Gastrocnemius medialis (tissue), 4 donors: ENCODE measurements at regions of chr5 and their contacts with region 1.

Region 1: GRCh38 chr5:159106569-159107282 is 7.0 kb upstream of the EBF1 start:
- DNase-seq: peak in 1 of 2 donors; percentile 40
- ATAC-seq: peak; percentile 71 to 75
- H3K4me3 ChIP-seq: peak overlapping the region; percentile 30 to 53 (median 42)
- H3K27ac ChIP-seq: peak overlapping the region in 1 of 4 donors; percentile 29
- H3K4me1 ChIP-seq: no peaks in the 10 kb centered on the region
- H3K27me3 ChIP-seq: peaks cover 34 to 50% (median 39%) of the 10 kb centered on the region in 3 donors
- CTCF ChIP-seq: peak; percentile 76 to 85 (median 82)
- POLR2A ChIP-seq: no peak

Region 2: DNA sequence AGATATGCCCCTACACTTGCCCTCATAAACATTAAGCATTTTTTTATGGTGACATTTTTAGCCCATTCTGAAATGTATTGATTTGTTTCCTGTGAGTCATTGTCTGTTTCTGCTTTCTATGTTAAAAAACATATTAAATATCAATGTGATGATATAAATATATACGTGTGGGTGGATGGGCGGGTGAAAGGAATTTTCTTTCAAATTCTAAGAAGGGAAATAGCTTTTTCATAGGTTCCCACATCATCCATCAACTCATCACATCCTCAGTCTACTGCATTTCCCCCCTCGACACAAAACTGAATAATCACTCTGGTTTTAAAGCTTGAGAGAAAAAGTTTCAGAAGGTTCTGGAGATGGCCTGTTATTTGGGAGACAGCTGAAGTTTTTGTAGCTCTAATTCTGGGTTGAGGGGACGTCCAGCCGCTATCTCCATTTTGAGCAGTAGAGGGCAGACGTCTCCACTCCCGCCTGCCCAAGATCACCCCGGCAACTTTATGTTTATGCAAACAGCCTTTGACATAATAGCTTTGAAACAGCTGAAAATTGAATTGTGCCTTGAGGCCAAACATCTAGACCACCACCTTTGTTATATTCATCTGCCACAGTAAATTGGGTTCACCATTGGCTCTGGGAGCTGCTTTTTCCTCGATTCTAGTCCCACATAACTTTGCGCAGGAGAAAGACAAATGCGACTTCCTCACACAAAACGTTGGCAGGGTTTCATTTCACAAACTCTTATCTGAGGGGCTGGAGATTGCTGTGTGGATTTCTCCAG is 1031.5 kb before region 1 on chr5:
- in situ Hi-C with region 1: loop called in 2 of 4 experiments (anchors 25 kb)
- intact Hi-C with region 1: loop called (anchors 5 kb)
- DNase-seq: peak; percentile 6 to 29
- ATAC-seq: peak; percentile 19 to 62
- H3K4me3 ChIP-seq: peak overlapping the region in 3 of 4 donors; percentile 15 to 31 (median 21)
- H3K27ac ChIP-seq: peak overlapping the region in 2 of 4 donors; percentile 9 to 21
- H3K4me1 ChIP-seq: no peaks in the 10 kb centered on the region
- H3K27me3 ChIP-seq: peaks cover 0 to 3% (median 0%) of the 10 kb centered on the region in 3 donors
- CTCF ChIP-seq: peak in 4 of 5 experiments; percentile 39 to 70 (median 60)
- POLR2A ChIP-seq: no peak

Region 3: GRCh38 chr5:158456756-158457155 is 650.0 kb before region 1 on chr5:
- in situ Hi-C with region 1: loop called in 1 of 4 experiments (anchors 25 kb)
- intact Hi-C with region 1: loop called (anchors 10 kb)
- DNase-seq: no peak
- ATAC-seq: no peak
- H3K4me3 ChIP-seq: no peak overlapping the region
- H3K27ac ChIP-seq: no peak overlapping the region
- H3K4me1 ChIP-seq: peaks cover 0 to 3% of the 10 kb centered on the region in 2 donors
- H3K27me3 ChIP-seq: no peaks in the 10 kb centered on the region
- CTCF ChIP-seq: no peak
- POLR2A ChIP-seq: no peak

Region 4: DNA sequence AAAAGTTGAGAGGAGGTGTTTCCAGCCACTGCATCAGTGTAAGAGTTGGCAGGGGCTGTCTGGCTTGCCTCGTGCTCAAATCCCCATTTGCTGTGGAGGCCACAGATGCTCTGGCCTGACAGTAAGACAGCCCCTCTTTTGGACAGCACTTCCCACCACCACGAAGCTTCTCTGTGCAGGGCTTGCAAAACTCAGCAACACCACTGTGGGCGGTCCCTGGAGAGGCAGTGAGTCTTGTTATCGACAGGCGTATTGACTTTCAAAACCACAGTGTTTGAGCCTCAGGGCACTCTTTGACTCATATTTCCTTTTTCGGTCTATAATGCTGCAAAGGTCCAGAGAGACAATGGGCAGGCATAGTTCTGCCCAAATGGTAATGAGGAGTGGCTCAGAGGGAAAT is 546.6 kb before region 1 on chr5:
- in situ Hi-C with region 1: loop called in 1 of 4 experiments (anchors 25 kb)
- intact Hi-C with region 1: no loop called
- DNase-seq: no peak
- ATAC-seq: no peak
- H3K4me3 ChIP-seq: no peak overlapping the region
- H3K27ac ChIP-seq: no peak overlapping the region
- H3K4me1 ChIP-seq: no peaks in the 10 kb centered on the region
- H3K27me3 ChIP-seq: no peaks in the 10 kb centered on the region
- CTCF ChIP-seq: no peak
- POLR2A ChIP-seq: no peak